Activated T-helper 2 cell treated with anti-CD3 and anti-CD28 coated beads, Interferon-gamma antibody, Interleukin-2, Interleukin-4, amounts not matched to agents 10 μg/mL and 5 μg/mL and 100 μg/mL, durations not matched to agents 14 hours and 24 hours and 36 hours (primary cell): ENCODE measurements at regions of chr6 and their contacts with region 1.

Region 1: GRCh38 chr6:45922728-45923351 is 92.8 kb downstream of the CLIC5 start:
- DNase-seq: peak; percentile 58
- H3K4me3 Mint-ChIP-seq: peak overlapping the region; percentile 53
- H3K27ac Mint-ChIP-seq: peak overlapping the region; percentile 94
- H3K4me1 Mint-ChIP-seq: peaks cover 68% of the 10 kb centered on the region
- H3K27me3 Mint-ChIP-seq: no peaks in the 10 kb centered on the region

Region 2: GRCh38 chr6:44593539-44593944 is 1329.3 kb before region 1 on chr6:
- intact Hi-C with region 1: loop called (anchors 5 kb)
- DNase-seq: peak; percentile 49
- H3K4me3 Mint-ChIP-seq: no peak overlapping the region
- H3K27ac Mint-ChIP-seq: no peak overlapping the region
- H3K4me1 Mint-ChIP-seq: peaks cover 6% of the 10 kb centered on the region
- H3K27me3 Mint-ChIP-seq: peaks cover 16% of the 10 kb centered on the region

Region 3: DNA sequence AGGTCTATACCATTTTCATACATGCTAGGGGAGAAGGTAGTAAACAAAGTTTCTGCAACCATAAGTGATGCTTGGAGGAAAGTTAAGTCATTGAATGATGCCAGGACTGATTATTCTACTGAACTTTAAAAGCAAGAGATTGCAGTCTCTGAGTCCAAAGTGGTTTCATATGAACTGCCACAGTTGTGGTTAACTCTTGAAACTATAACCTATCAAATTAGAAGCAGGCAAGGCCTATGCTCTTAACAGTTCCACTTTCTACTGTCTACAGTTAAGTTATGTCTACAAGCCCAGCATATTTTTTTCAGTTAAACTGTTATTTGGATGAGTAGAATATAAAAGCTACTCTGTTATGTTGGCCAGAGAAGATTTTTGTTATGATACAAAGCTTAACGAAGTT is 921.2 kb before region 1 on chr6:
- intact Hi-C with region 1: loop called (anchors 5 kb)
- DNase-seq: peak; percentile 24
- H3K4me3 Mint-ChIP-seq: peak overlapping the region; percentile 5
- H3K27ac Mint-ChIP-seq: peak overlapping the region; percentile 93
- H3K4me1 Mint-ChIP-seq: peaks cover 39% of the 10 kb centered on the region
- H3K27me3 Mint-ChIP-seq: no peaks in the 10 kb centered on the region

Region 4: DNA sequence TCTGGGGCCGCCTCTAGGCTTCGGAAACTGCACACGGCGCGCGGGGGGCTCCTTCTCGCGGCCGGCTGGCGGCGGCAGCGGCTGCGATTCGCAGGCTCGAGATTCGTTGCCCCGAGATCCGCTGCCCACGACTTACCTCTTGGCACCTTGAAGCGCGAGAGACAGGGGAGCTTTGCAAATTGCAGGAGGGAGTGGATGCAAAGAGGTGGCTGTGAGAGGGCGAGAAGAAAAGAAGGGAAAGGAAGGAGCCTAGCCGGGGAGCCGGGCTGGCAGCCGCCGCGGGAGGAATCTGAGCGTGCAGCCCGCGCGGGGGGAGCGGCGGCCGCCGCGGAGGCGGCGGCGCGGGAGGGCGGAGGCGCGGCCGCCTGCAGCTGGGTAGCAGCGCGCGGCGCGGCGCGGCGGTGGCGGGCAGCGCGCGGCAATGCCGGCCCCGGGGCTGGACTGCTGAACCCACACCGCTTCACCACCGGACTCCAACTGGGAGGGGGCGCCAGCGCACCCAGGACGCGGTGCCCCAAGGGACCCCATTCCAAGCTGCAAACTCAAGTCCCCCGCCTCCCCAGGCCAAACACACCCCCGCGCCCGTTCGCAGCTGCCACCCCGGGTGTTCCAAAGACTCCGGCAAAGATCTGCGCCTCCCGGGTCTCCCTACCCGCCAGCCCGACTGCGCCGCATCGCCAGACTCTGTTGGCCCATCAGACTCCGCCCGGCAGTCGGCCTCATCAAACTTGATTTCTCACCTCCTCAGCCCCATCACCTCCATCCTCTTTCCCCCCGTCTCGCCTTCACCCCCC is 500.9 kb before region 1 on chr6:
- intact Hi-C with region 1: loop called (anchors 1 kb)
- DNase-seq: peak; percentile 64
- H3K4me3 Mint-ChIP-seq: peak overlapping the region; percentile 100
- H3K27ac Mint-ChIP-seq: peak overlapping the region; percentile 99
- H3K4me1 Mint-ChIP-seq: peaks cover 45% of the 10 kb centered on the region
- H3K27me3 Mint-ChIP-seq: no peaks in the 10 kb centered on the region

Region 5: DNA sequence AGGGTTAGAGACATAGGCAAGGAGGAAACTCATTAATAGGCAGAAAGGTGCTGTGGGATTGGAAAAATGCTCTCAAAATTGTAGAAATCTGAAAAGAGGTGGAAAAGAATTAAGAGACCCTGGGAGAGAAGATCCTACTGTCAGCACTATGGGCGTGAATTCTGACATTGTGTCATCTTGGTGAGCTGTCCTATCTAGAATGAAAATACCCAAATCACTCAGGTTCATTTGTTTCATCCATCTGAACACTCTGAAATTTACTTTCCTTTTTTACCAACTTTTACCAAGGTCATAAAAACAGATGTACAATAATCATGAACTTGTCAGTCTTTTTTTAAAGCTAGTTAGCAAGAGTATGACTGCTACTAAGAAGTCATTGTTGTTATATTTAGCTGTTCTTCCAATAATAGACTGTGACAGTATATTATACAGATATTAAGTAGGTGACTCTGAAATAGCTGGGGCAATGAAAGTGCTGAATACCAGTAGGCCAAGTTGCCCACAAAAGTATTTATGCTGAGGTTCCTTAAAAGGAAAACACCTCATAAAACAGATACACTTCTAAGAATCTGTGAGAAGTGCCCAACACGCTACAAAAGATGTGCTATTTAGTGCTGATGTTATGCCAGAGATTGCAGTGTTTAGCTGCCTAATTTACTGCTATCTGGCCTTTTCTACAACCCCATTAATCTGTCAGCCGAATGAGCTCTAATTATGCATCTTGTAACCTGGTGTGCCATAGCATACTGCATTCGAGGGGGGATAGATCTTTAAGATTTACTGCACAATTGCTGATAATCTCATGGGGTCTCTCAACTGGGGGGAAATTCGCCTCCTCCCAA is 327.6 kb before region 1 on chr6:
- intact Hi-C with region 1: loop called (anchors 2 kb)
- DNase-seq: no peak
- H3K4me3 Mint-ChIP-seq: peak overlapping the region; percentile 60
- H3K27ac Mint-ChIP-seq: peak overlapping the region; percentile 88
- H3K4me1 Mint-ChIP-seq: peaks cover 65% of the 10 kb centered on the region
- H3K27me3 Mint-ChIP-seq: no peaks in the 10 kb centered on the region

Region 6: DNA sequence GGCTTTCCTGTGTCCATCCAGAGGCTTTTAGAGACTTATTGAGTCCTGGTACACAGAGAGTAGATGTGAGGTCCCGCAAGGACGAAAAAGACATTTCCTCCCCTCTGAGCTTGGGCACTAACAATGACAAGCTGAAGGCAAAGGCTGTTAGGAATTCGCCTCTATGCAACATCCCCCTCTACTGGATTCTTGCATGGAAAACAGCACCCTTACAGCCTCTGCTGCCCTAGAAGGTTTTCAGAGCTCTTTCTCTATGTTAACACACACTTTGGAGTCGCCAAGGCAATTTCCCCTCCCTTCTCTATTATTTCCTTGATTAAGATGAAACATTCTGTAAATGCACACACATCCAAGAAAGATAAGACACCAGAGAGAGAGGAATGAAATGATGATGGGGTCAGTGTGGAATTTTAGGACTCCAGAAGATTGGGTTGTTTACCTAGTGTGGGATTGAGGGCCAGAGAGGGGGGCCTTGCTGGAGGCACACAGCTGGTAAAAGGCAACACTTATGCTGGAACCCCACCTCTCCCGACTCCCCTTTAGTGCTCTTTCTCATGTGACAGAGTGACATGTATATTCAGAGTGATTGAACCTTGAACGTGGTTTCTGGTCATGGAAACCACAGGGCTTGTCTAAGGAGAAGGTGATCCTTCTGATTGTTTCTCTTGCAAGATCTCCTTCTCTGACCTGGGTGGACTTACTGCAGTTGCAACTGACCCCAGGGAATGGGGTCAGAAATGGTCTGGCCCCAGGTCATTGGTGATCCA is 207.9 kb before region 1 on chr6:
- intact Hi-C with region 1: loop called (anchors 1 kb)
- DNase-seq: peak; percentile 49
- H3K4me3 Mint-ChIP-seq: peak overlapping the region; percentile 28
- H3K27ac Mint-ChIP-seq: peak overlapping the region; percentile 94
- H3K4me1 Mint-ChIP-seq: peaks cover 79% of the 10 kb centered on the region
- H3K27me3 Mint-ChIP-seq: no peaks in the 10 kb centered on the region

Region 7: DNA sequence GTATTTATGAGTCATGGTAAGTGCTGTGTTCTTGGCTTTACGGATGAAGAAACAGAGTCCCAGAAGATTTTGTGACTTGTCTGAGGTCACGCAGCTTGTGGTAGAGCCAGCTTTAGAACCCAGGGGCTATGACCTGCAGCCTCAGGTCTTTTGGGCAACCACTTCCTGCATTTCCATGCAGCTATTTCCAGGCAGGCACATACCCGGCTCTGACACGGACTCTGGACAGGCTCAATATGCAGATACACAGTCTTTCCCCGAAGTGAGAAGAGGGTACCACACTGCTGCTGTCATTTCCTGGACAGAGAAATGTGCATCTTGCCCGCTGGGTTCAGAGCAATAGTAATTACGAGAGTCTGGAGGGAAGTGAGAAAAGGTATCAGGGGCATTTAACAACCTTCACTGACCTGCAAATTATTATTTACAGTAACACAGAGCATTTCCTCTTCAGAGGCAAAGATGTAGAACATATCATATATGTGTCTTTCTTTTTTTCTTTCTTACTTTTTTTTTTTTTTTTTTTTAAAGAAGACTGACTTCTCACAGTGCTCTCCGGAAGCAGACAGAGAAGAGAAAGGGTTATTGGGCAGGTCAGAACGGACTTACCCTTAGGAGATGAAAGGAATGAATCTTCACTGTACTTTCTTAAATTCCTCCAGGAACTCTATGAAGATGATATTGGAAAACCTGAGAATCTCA is 92.2 kb before region 1 on chr6:
- intact Hi-C with region 1: loop called (anchors 1 kb)
- DNase-seq: peak; percentile 48
- H3K4me3 Mint-ChIP-seq: peak overlapping the region; percentile 79
- H3K27ac Mint-ChIP-seq: peak overlapping the region; percentile 94
- H3K4me1 Mint-ChIP-seq: peaks cover 61% of the 10 kb centered on the region
- H3K27me3 Mint-ChIP-seq: no peaks in the 10 kb centered on the region

Region 8: GRCh38 chr6:45986746-45987274 is 64.0 kb after region 1 on chr6:
- intact Hi-C with region 1: no loop called
- DNase-seq: no peak
- H3K4me3 Mint-ChIP-seq: no peak overlapping the region
- H3K27ac Mint-ChIP-seq: no peak overlapping the region
- H3K4me1 Mint-ChIP-seq: peaks cover 4% of the 10 kb centered on the region
- H3K27me3 Mint-ChIP-seq: peaks cover 1% of the 10 kb centered on the region